Psoas muscle (tissue), 8 donors: ENCODE measurements at regions of chr20 and their contacts with region 1.

Region 1: GRCh38 chr20:35601008-35601973 is 14.3 kb upstream of the SPAG4 start:
- DNase-seq: peak; percentile 77 to 92
- ATAC-seq: peak; percentile 86 to 97 (median 95)
- H3K4me3 ChIP-seq: peak overlapping the region; percentile 67
- H3K27ac ChIP-seq: no peak overlapping the region
- H3K4me1 ChIP-seq: peaks cover 11% of the 10 kb centered on the region
- H3K27me3 ChIP-seq: peaks cover 0 to 11% (median 1%) of the 10 kb centered on the region in 3 donors
- CTCF ChIP-seq: peak; percentile 57

Region 2: DNA sequence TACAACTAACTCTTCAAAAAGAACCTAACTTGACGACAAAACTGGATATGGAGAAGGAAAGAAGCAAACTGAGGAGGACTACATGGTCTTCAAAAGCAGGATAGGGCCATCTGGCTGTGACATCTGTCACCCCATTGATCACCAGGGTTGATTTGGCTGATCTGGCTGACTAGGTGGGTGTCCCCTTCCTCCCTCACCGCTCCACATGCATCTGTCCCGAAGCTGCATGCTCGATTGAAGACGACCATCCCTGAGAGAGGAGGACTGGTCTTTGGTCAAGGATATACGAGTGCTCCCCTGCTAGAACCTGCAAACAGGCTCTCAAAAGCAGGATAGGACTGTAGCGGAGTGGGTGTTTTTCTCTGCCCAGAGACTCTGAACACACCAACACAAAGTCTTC is 41.8 kb after region 1 on chr20:
- intact Hi-C with region 1: loop called in 1 of 2 experiments (anchors 1 kb)
- DNase-seq: no peak
- ATAC-seq: no peak
- H3K4me3 ChIP-seq: no peak overlapping the region
- H3K27ac ChIP-seq: no peak overlapping the region
- H3K4me1 ChIP-seq: peaks cover 18% of the 10 kb centered on the region
- H3K27me3 ChIP-seq: no peaks in the 10 kb centered on the region
- CTCF ChIP-seq: no peak

Region 3: GRCh38 chr20:35699127-35699975 is 98.1 kb after region 1 on chr20 and contains the starts of genes NFS1 and ROMO1:
- intact Hi-C with region 1: loop called in 1 of 2 experiments (anchors 10 kb)
- DNase-seq: peak; percentile 89 to 94
- ATAC-seq: peak; percentile 88 to 91 (median 90)
- H3K4me3 ChIP-seq: peak within 1 kb of the TSS; percentile 94
- H3K27ac ChIP-seq: peak within 1 kb of the TSS; percentile 95
- H3K4me1 ChIP-seq: peaks cover 35% of the 10 kb centered on the region
- H3K27me3 ChIP-seq: no peaks in the 10 kb centered on the region
- CTCF ChIP-seq: peak; percentile 16
- total RNA-seq, gene NFS1: 23.6 to 45.0 (median 40.3) TPM
- total RNA-seq, gene ROMO1: 133 to 172 (median 143) TPM

Region 4: DNA sequence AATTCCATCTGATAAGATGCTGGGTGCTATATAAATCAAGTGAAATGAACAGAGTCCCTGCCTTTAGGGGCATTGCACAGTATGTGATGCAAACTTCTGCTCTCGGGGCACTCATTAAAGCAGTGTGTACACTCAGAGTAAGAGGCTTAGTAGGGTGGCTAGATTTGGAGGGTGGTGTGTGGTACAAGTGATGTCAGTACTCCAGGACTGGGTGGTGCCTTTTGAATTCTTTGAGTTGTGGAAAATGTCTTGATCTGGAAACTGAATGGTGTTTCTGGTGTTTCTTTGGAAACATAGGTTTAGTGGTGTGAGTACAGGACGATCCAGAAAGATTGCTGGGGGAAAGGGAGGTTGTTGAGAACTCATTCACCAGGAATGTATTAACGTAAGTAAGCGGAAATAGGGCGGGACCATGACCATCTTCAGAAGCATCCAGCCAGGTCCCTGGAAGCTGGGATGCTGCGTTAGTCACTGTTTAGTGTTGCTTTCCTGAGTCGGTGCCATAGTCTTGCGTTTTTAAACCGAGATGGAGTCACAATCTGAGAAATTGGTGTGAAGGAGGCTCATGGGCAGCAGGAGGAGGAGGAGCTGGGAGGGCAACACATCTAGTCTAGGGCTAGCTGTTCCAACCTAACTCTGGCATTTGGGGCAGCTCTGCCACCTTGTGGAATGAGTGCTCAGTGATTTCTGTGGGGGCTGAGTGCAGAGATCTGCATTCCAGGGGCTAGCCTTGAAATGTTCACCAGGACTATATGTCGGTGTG is 282.7 kb after region 1 on chr20:
- intact Hi-C with region 1: loop called in 1 of 2 experiments (anchors 5 kb)
- DNase-seq: peak; percentile 77 to 85
- ATAC-seq: peak; percentile 82 to 87 (median 83)
- H3K4me3 ChIP-seq: no peak overlapping the region
- H3K27ac ChIP-seq: peak overlapping the region; percentile 80
- H3K4me1 ChIP-seq: peaks cover 45% of the 10 kb centered on the region
- H3K27me3 ChIP-seq: no peaks in the 10 kb centered on the region
- CTCF ChIP-seq: peak; percentile 77

Region 5: DNA sequence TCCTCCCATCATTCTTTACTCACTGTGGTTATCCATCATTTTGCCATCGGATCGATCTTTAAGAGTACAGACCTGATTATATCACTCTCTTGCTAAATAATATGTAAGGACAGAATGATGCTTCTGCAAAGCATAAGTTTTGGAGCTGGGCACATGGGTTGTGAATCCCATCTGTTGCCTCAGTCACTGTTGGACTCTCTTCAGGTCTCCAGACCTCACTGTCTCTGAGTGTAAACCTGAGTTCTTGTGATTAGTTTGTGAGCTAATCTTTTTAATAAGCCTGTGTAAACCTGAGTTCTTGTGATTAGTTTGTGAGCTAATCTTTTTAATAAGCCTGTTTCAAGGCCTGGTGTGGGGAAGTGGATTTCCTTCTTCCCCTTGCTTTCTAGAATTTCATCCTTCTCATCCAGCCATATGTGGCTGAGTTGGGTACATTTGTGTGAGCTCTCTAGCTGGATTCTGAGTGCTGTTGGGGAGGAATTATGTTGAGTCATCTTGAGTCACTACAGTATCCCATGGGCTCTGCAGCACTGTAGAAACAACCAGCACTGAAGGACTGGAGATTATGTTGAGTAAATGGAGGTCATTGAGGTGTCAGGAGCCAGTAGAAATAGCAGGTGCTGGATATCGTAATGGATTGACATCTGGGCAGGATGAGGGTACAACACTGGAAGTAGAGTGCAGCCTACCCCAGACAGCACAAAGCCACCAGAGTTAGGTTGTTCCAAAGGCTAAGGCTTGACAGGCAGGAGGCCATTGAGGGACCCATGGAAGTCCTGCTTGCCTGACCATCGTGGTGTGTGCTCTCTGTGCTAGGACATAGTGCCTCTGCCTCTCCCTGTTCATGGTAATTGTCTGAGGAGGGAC is 300.6 kb after region 1 on chr20:
- intact Hi-C with region 1: loop called in 1 of 2 experiments (anchors 10 kb)
- DNase-seq: no peak
- ATAC-seq: peak; percentile 65 to 80 (median 74)
- H3K4me3 ChIP-seq: no peak overlapping the region
- H3K27ac ChIP-seq: peak overlapping the region; percentile 65
- H3K4me1 ChIP-seq: peaks cover 16% of the 10 kb centered on the region
- H3K27me3 ChIP-seq: no peaks in the 10 kb centered on the region
- CTCF ChIP-seq: no peak